Common myeloid progenitor, CD34-positive (primary cell): ENCODE measurements at regions of chr21 and their contacts with region 1.

Region 1: DNA sequence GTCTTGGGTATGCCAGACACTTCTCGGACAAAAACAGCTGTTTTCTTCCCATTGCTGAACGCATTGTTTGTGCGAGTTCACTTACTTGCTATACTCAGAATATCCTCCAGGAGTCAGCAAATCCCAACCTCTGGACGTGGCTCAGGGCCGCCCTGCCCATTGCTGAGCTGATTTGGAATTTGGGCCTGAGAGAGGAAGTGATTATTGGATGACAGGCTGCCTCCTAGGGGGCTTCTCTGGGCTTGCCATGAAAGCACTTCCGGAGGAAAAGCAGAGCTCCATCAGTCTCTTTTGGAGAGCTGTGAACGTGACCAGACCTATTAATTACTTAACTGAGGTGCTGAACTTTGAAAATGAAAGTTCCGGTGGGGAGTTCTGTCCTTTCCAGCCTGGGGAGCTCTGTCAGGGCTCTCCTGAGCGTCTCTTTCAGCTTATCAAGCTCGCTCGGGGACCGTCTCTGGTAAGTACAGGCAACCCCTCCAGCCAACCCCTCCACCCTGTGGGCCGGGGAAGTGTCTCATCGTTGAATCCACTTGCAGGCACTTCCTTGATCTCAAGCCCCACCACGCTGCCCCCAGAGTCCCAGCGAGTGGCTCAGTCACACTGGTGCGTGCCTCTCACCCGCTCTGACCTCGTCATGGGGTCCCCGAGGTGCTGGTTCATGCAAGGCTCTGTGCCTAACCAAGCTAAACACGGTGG is 76.9 kb downstream of the CLIC6 start:
- DNase-seq: peak; percentile 85 to 90 (median 90)
- H3K4me3 ChIP-seq: peak overlapping the region in 6 of 7 experiments; percentile 13 to 76 (median 48)
- H3K27ac ChIP-seq: no peak overlapping the region
- H3K4me1 ChIP-seq: peaks cover 0 to 12% (median 6%) of the 10 kb centered on the region in 4 experiments
- H3K27me3 ChIP-seq: peaks cover 0 to 3% (median 0%) of the 10 kb centered on the region in 5 experiments

Region 2: DNA sequence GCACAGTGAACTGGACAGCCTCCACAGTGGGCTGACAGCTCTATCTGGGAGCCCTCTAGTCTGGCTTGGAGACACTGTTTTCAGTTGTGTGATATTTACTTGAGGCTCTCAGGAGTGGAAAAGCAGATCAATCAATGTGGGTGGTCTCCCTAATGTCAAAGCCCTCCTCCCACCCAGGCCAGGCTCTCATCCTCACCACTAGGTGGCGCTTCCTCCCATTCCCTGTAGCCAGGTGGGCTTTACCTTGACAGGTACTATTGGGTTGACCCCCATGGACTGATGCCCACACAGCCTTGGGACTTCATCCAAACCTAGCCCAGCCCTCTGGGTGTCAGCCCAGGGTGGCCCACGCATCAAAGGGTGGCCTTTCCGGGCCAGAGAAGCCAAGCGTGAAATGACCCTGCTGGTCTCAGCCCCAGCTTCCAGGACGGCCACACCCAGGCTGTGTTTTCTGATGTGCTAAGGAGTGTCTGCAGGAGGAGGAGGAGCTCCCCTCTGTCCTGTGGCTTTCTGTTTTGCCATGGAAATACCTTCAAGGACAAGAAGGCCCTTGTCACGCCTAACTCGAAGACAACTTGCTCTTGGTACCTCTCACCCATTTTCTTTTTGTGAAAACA is 22.9 kb before region 1 on chr21:
- CTCF ChIA-PET with region 1: interaction called, 18 read pairs
- POLR2A ChIA-PET with region 1: no interaction called
- DNase-seq: peak; percentile 19 to 21 (median 20)
- H3K4me3 ChIP-seq: no peak overlapping the region
- H3K27ac ChIP-seq: no peak overlapping the region
- H3K4me1 ChIP-seq: peaks cover 0 to 9% (median 2%) of the 10 kb centered on the region in 4 experiments
- H3K27me3 ChIP-seq: peaks cover 0 to 2% (median 0%) of the 10 kb centered on the region in 5 experiments

Region 3: DNA sequence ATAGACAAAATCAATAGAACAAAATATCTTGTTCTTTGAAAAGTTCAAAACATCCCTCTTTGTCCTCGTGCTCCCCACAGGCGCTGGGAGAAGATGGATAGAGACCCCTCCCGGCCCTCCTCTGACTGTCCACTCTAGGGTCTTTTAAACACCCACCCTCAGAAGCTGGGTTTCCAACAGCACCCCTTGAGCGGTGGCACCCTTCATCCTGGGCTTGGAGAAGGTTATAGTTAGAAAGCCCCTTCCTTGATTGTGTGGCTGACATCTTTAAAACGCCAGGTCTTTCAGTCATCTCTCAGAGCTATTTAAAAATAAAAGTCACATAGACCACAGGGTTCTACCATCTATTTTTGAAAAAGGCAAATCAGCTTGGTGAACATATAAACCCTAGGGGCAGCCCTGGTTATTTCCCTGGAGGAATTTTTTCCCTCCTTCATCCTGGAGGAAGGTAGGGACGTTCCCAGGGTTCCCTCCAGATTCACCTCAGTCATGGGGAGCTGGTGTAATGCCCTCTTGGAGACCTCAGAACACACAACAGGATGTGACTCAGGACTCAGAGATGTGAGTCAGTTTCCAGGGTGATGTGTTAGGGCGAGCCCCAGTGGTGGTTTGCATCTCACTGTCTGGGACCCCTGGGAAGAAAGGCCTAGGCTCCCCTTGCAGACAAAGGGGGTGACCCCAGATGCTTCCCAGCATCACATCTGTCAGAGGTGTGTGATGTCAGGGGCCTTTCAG is 61.6 kb after region 1 on chr21:
- CTCF ChIA-PET with region 1: no interaction called
- POLR2A ChIA-PET with region 1: no interaction called
- DNase-seq: peak in 2 of 3 donors; percentile 52 to 59
- H3K4me3 ChIP-seq: no peak overlapping the region
- H3K27ac ChIP-seq: no peak overlapping the region
- H3K4me1 ChIP-seq: peaks cover 0 to 12% (median 4%) of the 10 kb centered on the region in 4 experiments
- H3K27me3 ChIP-seq: no peaks in the 10 kb centered on the region